A549 (cell line): ENCODE measurements at regions of chr1 and their contacts with region 1.

Region 1: DNA sequence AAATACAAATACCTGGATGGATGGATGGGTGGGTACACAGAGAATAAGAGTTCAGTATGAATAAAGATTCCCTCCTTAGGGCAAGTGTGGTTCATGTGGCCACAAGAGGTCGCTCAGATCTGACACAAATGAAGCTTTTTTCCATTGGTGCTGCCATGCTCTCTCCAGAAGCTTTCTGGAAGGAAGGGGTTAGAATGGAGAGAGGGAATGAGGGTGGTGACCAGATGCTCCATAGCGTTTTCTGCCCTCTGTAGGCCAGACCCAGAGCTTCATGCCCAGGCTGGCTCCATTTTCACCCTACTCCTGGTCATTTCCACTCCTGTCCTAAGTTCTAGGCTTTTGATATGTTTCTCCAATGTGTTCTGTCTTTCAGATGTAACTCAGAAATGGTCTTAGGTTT is 3.3 kb upstream of the FCRL6 start:
- DNase-seq: peak; percentile 86 to 91
- ATAC-seq: peak; percentile 91 to 99
- H3K4me3 ChIP-seq: no peak overlapping the region
- H3K27ac ChIP-seq: no peak overlapping the region
- H3K4me1 ChIP-seq: no peaks in the 10 kb centered on the region
- CTCF ChIP-seq: peak; percentile 88
- EP300 ChIP-seq: no peak
- POLR2A ChIP-seq: no peak
- RAD21 ChIP-seq: peak; percentile 87

Region 2: DNA sequence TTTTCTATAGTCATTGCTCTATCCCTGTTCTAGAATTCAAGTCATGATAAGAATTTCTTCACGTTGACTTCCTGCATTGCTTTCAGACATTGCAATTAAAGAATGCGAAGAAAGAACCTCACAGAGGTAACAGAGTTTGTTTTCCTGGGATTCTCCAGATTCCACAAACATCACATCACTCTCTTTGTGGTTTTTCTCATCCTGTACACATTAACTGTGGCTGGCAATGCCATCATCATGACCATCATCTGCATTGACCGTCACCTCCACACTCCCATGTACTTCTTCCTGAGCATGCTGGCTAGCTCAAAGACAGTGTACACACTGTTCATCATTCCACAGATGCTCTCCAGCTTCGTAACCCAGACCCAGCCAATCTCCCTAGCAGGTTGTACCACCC is 200.7 kb before region 1 on chr1:
- CTCF ChIA-PET with region 1: no interaction called
- POLR2A ChIA-PET with region 1: no interaction called
- DNase-seq: peak; percentile 43 to 88
- ATAC-seq: peak; percentile 97
- H3K4me3 ChIP-seq: no peak overlapping the region
- H3K27ac ChIP-seq: peak overlapping the region; percentile 83 to 85
- H3K4me1 ChIP-seq: peaks cover 28% of the 10 kb centered on the region
- CTCF ChIP-seq: no peak
- EP300 ChIP-seq: peak; percentile 73 to 92; a peak in 3 of 5 replicates
- POLR2A ChIP-seq: no peak
- RAD21 ChIP-seq: peak; percentile 19 to 39; a peak in 1 of 5 replicates

Region 3: GRCh38 chr1:159752135-159752580 is 46.7 kb before region 1 on chr1:
- CTCF ChIA-PET with region 1: no interaction called
- POLR2A ChIA-PET with region 1: no interaction called
- DNase-seq: peak in 1 of 2 experiments; percentile 76
- ATAC-seq: peak; percentile 25 to 79; a peak in 3 of 6 replicates
- H3K4me3 ChIP-seq: no peak overlapping the region
- H3K27ac ChIP-seq: peak overlapping the region; percentile 63 to 67; a peak in 5 of 6 replicates
- H3K4me1 ChIP-seq: peaks cover 11% of the 10 kb centered on the region
- CTCF ChIP-seq: no peak
- EP300 ChIP-seq: peak; percentile 32 to 78; a peak in 3 of 5 replicates
- POLR2A ChIP-seq: no peak
- RAD21 ChIP-seq: no peak; a peak in 1 of 5 replicates

Region 4: GRCh38 chr1:159817276-159818041 is 18.6 kb after region 1 on chr1:
- CTCF ChIA-PET with region 1: interaction called, 16 read pairs
- POLR2A ChIA-PET with region 1: no interaction called
- DNase-seq: peak in 1 of 2 experiments; percentile 58
- ATAC-seq: peak; percentile 70 to 79; a peak in 5 of 6 replicates
- H3K4me3 ChIP-seq: no peak overlapping the region
- H3K27ac ChIP-seq: no peak overlapping the region
- H3K4me1 ChIP-seq: peaks cover 4% of the 10 kb centered on the region; the same call in 1 of the 3 replicates
- CTCF ChIP-seq: no peak
- EP300 ChIP-seq: no peak
- POLR2A ChIP-seq: no peak
- RAD21 ChIP-seq: no peak

Region 5: DNA sequence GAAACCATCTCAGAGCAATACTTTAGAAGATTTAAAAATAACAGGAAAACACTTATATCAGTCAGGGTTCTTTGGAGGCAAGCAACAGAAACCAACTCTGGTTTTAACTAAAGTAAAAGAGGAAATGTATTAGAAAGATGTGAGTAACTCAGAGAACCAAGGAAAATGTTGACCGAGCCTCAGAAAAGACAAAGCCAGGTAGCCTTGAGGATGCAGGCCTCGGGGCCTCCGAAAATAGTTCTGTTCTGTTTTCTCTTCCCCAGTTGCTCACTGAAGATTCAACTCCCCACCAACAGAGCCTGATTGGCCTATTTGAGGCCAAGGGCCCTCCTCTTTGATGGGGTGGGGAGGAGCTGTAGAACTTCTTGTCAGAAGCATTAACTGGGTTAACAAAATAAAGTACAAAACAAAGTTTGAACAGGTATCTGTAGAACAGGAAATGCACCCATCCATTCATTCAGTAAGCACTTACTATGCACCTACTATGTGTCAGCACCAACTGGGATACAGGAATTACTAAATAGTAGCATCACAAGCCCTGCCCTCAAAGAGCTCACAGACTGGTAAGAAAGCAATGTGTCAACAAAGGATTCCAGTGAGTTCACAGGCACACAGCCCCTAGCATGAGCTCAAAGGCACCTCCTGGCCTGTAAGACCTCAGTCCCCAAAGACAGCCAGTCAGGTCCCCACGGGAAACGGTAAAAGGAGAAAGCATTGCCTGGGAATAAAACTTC is 40.4 kb after region 1 on chr1:
- CTCF ChIA-PET with region 1: interaction called, 18 read pairs
- POLR2A ChIA-PET with region 1: no interaction called
- DNase-seq: no peak
- ATAC-seq: no peak
- H3K4me3 ChIP-seq: no peak overlapping the region
- H3K27ac ChIP-seq: no peak overlapping the region
- H3K4me1 ChIP-seq: no peaks in the 10 kb centered on the region
- CTCF ChIP-seq: no peak
- EP300 ChIP-seq: no peak
- POLR2A ChIP-seq: no peak
- RAD21 ChIP-seq: no peak

Region 6: DNA sequence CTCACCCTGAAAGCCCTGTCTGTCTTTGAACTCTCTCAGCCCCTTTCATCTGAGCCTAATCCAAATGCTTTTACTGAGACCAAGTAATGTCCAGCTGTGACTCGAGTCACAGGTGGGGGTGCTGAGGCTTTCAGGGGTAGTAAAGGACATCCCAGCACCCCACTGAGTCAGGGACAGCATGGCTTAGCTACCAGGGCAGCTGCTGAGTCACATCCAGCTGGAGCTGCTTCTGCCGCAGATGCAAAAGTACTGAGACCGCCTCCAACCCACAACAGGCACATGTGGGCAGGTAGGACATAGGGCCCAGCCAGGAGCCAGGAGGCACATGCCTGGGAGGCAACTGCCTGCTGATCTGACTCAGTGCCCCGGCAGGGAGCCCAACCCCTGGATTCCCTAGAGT is 70.3 kb after region 1 on chr1:
- CTCF ChIA-PET with region 1: interaction called, 15 read pairs
- POLR2A ChIA-PET with region 1: no interaction called
- DNase-seq: no peak
- ATAC-seq: peak in 1 of 2 experiments; percentile 42; a peak in 1 of 6 replicates
- H3K4me3 ChIP-seq: no peak overlapping the region
- H3K27ac ChIP-seq: peak overlapping the region in 1 of 2 experiments; percentile 32; a peak in 1 of 6 replicates
- H3K4me1 ChIP-seq: 0 out of 3 replicates have a peak, but pooled peaks cover 3% of the 10 kb centered on the region
- CTCF ChIP-seq: no peak
- EP300 ChIP-seq: no peak
- POLR2A ChIP-seq: no peak
- RAD21 ChIP-seq: no peak

Region 7: DNA sequence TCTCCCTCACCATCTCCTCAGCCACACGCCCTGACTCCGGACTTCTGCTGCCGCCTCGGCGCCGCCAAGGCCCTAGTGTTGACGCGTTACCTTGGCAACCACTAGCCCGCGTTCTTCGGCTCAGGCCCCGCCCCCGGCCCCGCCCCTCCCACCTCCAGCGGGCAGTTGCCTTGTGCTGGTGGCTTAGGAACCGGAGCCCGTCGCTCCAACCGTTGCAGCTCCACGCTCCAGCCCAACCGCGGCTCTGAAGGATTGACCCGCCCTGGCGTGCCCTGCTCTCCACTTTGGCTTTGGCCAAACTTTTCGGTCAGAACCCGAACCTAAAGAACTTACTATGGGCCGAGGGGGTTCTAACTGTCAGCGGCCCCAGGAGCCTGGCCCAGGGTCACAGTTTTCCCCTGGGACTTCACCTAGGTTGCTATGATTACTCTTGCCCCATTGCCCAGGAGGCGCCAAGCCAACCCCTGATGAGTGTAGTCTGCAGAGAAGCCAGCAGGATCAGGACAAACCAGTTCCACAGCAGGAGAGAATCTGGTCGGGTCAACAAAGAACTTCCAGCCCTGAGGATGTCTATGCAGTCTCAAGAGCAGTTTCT is 101.3 kb after region 1 on chr1 and contains the start of gene CFAP45:
- CTCF ChIA-PET with region 1: interaction called, 565 read pairs
- POLR2A ChIA-PET with region 1: no interaction called
- DNase-seq: peak in 1 of 2 experiments; percentile 59
- ATAC-seq: peak; percentile 60 to 80
- H3K4me3 ChIP-seq: no peak within 1 kb of the TSS
- H3K27ac ChIP-seq: peak within 1 kb of the TSS in 1 of 2 experiments; percentile 13; a peak in 1 of 6 replicates
- H3K4me1 ChIP-seq: no peaks in the 10 kb centered on the region
- CTCF ChIP-seq: no peak
- EP300 ChIP-seq: no peak
- POLR2A ChIP-seq: no peak
- RAD21 ChIP-seq: no peak
- polyA plus RNA-seq, gene CFAP45: 0.50 and 0.67 TPM in 2 replicates